H1 (cell line): ENCODE measurements at regions of chr4 and their contacts with region 1.

Region 1: DNA sequence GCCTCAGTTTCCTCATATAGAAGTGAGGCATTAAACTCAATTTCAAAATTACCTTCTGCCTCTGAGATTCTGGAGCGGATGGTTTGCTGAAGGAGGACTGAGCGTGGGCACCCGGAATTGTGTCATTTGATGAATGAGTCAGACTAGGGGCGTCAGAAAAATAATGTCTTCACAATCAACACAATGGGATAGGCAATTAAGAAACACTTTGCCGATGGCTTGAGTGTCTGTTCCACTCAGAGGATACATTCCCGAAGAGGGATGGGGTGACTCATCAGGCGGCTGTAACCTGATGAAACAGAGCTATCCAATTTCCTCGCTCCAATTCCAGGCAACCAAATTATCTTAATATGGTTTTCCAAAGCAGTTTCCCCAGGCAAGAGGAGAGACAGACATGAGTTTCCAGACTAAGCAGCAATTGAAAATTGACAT is 1.2 kb upstream of the CHRNA9 start:
- DNase-seq: no peak
- H3K4me3 ChIP-seq: no peak overlapping the region
- H3K27ac ChIP-seq: no peak overlapping the region
- H3K4me1 ChIP-seq: peaks cover 6 to 11% (median 8%) of the 10 kb centered on the region in 4 experiments; a peak in 6 of 7 replicates
- H3K27me3 ChIP-seq: no peaks in the 10 kb centered on the region
- CTCF ChIP-seq: no peak
- EP300 ChIP-seq: no peak
- POLR2A ChIP-seq: no peak
- RAD21 ChIP-seq: no peak

Region 2: DNA sequence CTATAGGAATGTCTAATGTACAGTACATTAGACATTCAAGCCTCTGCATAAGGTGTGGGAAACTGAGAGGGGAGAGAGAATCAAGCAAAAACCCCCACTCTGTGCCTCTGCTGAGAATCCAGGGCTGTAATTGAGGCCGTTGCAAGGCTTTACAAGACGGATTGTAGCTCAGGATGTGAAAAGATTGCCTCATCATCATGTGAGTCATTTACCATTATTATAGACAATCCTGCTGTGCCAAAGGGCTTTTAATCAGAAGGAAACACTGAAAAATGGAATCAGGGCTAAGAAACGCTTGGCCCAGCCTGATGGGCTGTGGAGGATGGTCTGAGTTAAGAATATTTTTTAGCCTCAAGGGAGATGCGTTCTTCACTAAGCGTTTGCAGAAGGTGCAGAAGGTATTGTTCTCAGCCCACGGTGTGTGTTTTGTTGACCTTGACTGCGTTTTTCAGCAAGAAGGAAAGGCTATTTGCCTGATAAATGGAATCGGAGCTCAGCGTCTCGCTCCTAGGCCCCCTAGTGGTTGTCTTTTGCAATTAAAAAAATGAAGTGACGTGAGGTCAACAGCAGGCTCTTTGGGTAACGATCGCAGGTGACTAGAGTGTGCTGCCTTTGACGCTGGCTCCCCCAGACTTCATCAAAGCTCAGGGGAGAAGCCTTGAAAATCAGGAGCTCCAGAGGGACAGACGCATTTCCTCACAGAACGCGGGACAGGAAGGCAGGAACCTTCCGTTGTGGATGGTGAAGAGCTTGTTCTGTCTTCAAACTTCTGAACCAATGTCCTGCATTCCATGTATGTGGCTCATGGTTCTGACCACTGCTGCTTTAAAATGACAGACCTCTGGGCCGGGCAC is 16.9 kb before region 1 on chr4:
- CTCF ChIA-PET with region 1: interaction called, 65 read pairs
- POLR2A ChIA-PET with region 1: interaction called, 5 read pairs
- DNase-seq: peak; percentile 43 to 72
- H3K4me3 ChIP-seq: peak overlapping the region in 1 of 4 experiments; percentile 28; a peak in 1 of 8 replicates
- H3K27ac ChIP-seq: no peak overlapping the region
- H3K4me1 ChIP-seq: peaks cover 4 to 9% (median 8%) of the 10 kb centered on the region in 4 experiments; a peak in 6 of 7 replicates
- H3K27me3 ChIP-seq: peaks cover 0 to 1% (median 0%) of the 10 kb centered on the region in 4 experiments; a peak in 1 of 7 replicates
- CTCF ChIP-seq: peak in 2 of 3 experiments; percentile 77 to 85; a peak in 3 of 4 replicates
- EP300 ChIP-seq: no peak
- POLR2A ChIP-seq: no peak
- RAD21 ChIP-seq: peak; percentile 61 to 71